ENCODE measurements at regions of chr9 and their contacts with region 1.

Region 1: DNA sequence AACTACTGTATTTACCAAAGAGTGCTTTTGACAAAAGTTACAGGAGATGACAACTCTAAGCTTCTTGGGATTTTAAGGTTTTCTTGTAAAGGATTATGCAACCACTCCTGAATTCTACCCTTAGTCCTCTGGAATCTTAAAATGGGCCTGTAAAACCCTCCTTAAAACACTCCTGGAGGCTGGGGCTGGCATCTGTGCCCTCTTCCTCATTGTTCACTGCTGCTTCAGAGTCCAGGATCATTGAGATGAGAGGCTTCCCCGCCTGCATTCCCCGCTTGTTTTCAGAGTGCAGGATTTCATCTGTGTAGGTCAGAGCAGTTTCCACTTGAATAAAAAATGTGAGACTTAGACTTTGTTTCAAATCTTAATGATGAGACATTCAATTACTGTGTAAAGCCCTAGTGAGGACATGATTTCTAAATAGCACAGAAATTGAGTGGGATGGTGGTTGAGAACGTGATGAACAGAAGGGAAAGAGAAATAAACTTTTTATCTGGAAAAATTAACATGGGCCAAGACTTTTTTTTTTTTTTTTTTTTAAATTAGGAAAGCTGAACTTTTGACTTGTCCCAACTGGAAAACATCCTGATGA is 40.4 kb downstream of the PCSK5 start:
- DNase-seq: no peak
- H3K4me3 Mint-ChIP-seq: no peak overlapping the region
- H3K27ac Mint-ChIP-seq: peak overlapping the region; percentile 37
- H3K4me1 Mint-ChIP-seq: peaks cover 50% of the 10 kb centered on the region
- H3K27me3 Mint-ChIP-seq: no peaks in the 10 kb centered on the region
- CTCF ChIP-seq: no peak

Region 2: GRCh38 chr9:75946726-75947125 is 15.9 kb after region 1 on chr9:
- CTCF ChIA-PET with region 1: no interaction called
- intact Hi-C with region 1: loop called (anchors 2 kb)
- DNase-seq: no peak
- H3K4me3 Mint-ChIP-seq: no peak overlapping the region
- H3K27ac Mint-ChIP-seq: peak overlapping the region; percentile 33
- H3K4me1 Mint-ChIP-seq: peaks cover 3% of the 10 kb centered on the region
- H3K27me3 Mint-ChIP-seq: no peaks in the 10 kb centered on the region
- CTCF ChIP-seq: no peak

Measured in Calu3 (cell line).